ENCODE measurements at regions of chr12 and their contacts with region 1.

Region 1: DNA sequence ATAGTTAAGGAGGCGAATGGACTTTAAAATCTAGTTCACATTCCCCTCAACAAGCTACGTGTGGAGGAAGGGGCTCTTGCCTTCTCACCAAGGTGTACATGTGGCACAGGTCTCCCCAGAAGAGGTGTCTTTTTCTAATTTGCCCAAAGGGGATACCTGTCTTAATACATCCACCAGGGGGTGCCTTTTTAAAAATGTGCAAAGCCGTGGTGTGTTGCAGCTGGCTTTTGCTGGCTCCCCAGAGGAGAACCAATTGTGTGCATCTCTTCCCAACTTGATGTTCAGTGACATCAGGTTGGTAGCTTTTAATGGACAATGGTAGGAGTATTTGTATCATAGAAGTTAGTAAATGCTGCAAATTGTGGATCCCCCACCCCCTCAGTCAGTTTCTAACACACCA is 33.8 kb downstream of the CREBL2 start:
- DNase-seq: no peak
- H3K4me3 ChIP-seq: no peak overlapping the region
- H3K27ac ChIP-seq: peak overlapping the region; percentile 22
- H3K27me3 ChIP-seq: no peaks in the 10 kb centered on the region
- CTCF ChIP-seq: peak; percentile 60

Region 2: DNA sequence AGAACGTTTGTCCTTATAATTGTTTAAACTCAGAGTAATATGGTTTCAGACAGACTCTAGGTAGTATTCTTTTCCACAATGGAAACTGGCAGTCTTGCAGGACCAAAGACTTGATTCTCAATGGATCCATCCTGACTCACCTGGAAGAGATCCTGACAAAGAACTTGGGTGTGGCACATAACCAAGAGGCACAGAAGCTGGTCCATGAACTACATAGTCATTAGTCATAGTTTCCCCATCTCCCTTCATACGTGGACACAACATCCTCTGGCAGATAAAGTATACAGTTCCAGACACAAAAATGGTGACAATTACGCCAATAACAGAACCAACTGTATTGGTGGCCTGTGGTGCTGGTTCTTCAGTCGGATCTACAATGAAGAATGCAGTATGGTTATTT is 518.9 kb before region 1 on chr12:
- CTCF ChIA-PET with region 1: interaction called, 11 read pairs
- POLR2A ChIA-PET with region 1: no interaction called
- DNase-seq: no peak
- H3K4me3 ChIP-seq: no peak overlapping the region
- H3K27ac ChIP-seq: no peak overlapping the region
- H3K27me3 ChIP-seq: no peaks in the 10 kb centered on the region
- CTCF ChIP-seq: no peak

Region 3: GRCh38 chr12:12302976-12303375 is 342.5 kb before region 1 on chr12:
- CTCF ChIA-PET with region 1: interaction called, 10 read pairs
- POLR2A ChIA-PET with region 1: no interaction called
- DNase-seq: no peak
- H3K4me3 ChIP-seq: no peak overlapping the region
- H3K27ac ChIP-seq: no peak overlapping the region
- H3K27me3 ChIP-seq: no peaks in the 10 kb centered on the region
- CTCF ChIP-seq: no peak

Region 4: GRCh38 chr12:12630850-12631249 is 14.6 kb before region 1 on chr12:
- CTCF ChIA-PET with region 1: interaction called, 13 read pairs
- POLR2A ChIA-PET with region 1: no interaction called
- DNase-seq: no peak
- H3K4me3 ChIP-seq: no peak overlapping the region
- H3K27ac ChIP-seq: no peak overlapping the region
- H3K27me3 ChIP-seq: no peaks in the 10 kb centered on the region
- CTCF ChIP-seq: no peak

Measured in AG04450 (cell line).